CD8-positive, alpha-beta T cell (primary cell): ENCODE measurements at regions of chr18 and their contacts with region 1.

Region 1: GRCh38 chr18:2794159-2794558 is 52.6 kb upstream of the EMILIN2 start:
- DNase-seq: no peak
- ATAC-seq: no peak
- H3K4me3 ChIP-seq: no peak overlapping the region
- H3K4me3 Mint-ChIP-seq: no peak overlapping the region
- H3K27ac ChIP-seq: no peak overlapping the region
- H3K27ac Mint-ChIP-seq: no peak overlapping the region
- H3K4me1 ChIP-seq: no peaks in the 10 kb centered on the region
- H3K4me1 Mint-ChIP-seq: peaks cover 9% of the 10 kb centered on the region
- H3K27me3 ChIP-seq: no peaks in the 10 kb centered on the region
- H3K27me3 Mint-ChIP-seq: no peaks in the 10 kb centered on the region
- CTCF ChIP-seq: no peak

Region 2: DNA sequence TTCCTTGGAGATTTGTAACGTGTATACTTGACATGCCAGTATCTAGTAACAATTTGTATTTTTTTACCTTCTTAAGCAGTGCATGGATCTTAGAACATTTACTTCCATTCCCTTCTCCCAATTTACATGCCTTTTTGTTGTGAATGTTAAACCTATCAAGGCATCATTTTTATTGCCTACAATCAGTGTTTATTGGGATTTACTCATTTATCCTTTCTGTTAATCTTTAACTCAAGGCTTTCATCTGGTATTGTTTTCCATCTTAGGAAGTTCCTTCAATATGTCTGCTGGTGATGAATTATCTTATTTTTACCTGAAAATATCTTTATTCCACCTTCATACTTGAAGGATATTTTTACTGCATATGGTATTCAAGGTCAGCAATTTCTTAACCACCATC is 35.9 kb before region 1 on chr18:
- CTCF ChIA-PET with region 1: no interaction called
- POLR2A ChIA-PET with region 1: no interaction called
- intact Hi-C with region 1: loop called in 1 of 2 experiments (anchors 5 kb)
- DNase-seq: no peak
- ATAC-seq: no peak
- H3K4me3 ChIP-seq: no peak overlapping the region
- H3K4me3 Mint-ChIP-seq: no peak overlapping the region
- H3K27ac ChIP-seq: no peak overlapping the region
- H3K27ac Mint-ChIP-seq: peak overlapping the region; percentile 37
- H3K4me1 ChIP-seq: no peaks in the 10 kb centered on the region
- H3K4me1 Mint-ChIP-seq: peaks cover 26% of the 10 kb centered on the region
- H3K27me3 ChIP-seq: no peaks in the 10 kb centered on the region
- H3K27me3 Mint-ChIP-seq: no peaks in the 10 kb centered on the region
- CTCF ChIP-seq: no peak